H1 (cell line): ENCODE measurements at regions of chr12 and their contacts with region 1.

Region 1: DNA sequence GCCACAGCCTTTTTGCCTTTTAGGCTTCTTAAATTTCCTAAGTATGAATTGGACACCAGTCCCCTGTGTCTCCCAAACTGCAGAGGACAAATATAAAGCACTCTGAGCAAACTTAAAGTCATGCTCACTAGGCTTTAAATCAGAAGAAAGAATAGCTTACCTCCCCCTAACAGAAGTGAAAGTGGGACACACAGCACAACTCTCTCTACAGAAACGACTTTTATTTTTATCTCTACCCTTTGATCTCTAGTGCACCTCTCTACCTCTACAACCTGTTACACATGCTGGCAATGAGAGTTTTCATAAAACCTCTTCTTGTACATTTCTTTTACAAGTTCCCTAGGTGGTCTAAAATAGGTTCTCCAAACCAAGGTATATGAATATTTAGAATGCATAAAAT is 19.7 kb downstream of the IAPP start:
- DNase-seq: no peak
- H3K4me3 ChIP-seq: no peak overlapping the region
- H3K27ac ChIP-seq: no peak overlapping the region
- H3K4me1 ChIP-seq: no peaks in the 10 kb centered on the region
- H3K27me3 ChIP-seq: no peaks in the 10 kb centered on the region
- CTCF ChIP-seq: no peak
- EP300 ChIP-seq: no peak
- POLR2A ChIP-seq: no peak
- RAD21 ChIP-seq: no peak

Region 2: GRCh38 chr12:21438643-21439042 is 46.3 kb after region 1 on chr12:
- CTCF ChIA-PET with region 1: no interaction called
- POLR2A ChIA-PET with region 1: interaction called, 10 read pairs
- DNase-seq: no peak
- H3K4me3 ChIP-seq: peak overlapping the region; percentile 65 to 79 (median 78); a peak in 6 of 8 replicates
- H3K27ac ChIP-seq: no peak overlapping the region
- H3K4me1 ChIP-seq: no peaks in the 10 kb centered on the region
- H3K27me3 ChIP-seq: no peaks in the 10 kb centered on the region
- CTCF ChIP-seq: no peak
- EP300 ChIP-seq: no peak
- POLR2A ChIP-seq: no peak
- RAD21 ChIP-seq: no peak

Region 3: GRCh38 chr12:21456291-21456780 is 64.0 kb after region 1 on chr12:
- CTCF ChIA-PET with region 1: no interaction called
- POLR2A ChIA-PET with region 1: no interaction called
- DNase-seq: no peak
- H3K4me3 ChIP-seq: no peak overlapping the region
- H3K27ac ChIP-seq: no peak overlapping the region
- H3K4me1 ChIP-seq: no peaks in the 10 kb centered on the region
- H3K27me3 ChIP-seq: no peaks in the 10 kb centered on the region
- CTCF ChIP-seq: no peak
- EP300 ChIP-seq: no peak
- POLR2A ChIP-seq: no peak
- RAD21 ChIP-seq: no peak